Heart right ventricle (tissue), 16 donors: ENCODE measurements at regions of chr17 and their contacts with region 1.

Region 1: DNA sequence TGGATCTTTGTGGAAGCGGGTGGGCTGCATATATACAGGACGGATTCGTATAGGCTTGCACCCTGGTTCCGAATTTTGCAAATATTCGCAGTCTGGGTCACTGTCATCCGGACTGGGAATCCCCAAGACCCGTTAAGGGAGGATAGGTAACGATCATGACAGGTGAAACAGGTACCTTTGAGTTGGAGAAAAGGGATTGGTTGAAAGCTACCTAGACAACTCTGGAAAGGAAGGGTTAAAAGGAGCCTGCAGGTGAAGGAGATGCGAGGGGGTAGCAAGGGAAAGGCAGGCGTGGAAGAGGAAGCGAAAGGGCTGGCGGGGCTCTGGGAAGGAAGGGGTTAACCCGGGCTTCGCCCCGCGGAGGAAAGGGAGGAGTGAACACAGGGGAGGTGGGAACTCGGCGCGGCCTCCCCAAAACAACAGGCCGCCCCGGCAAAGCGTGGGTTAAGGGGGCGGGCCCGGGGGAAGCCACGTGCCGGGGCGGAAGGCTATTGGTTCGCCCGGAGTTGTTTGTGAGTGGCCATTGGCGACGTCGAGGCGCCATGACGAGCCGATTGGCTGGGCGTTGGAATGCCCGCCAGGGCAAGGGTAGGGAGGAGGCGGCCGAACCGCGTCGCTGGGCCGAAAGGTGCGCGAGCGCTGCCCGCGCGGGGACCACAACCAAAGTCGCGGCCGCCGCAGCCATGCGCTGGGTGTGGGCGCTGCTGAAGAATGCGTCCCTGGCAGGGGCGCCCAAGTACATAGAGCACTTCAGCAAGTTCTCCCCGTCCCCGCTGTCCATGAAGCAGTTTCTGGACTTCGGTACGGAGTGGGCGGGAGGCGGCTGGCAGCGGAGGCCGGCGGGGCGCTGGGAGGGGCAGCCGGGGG is at the start of gene PDK2:
- DNase-seq: peak; percentile 96
- ATAC-seq: peak; percentile 92 to 98 (median 96)
- H3K4me3 ChIP-seq: peak within 1 kb of the TSS; percentile 63 to 97 (median 93)
- H3K27ac ChIP-seq: peak within 1 kb of the TSS; percentile 66 to 96 (median 92)
- H3K4me1 ChIP-seq: peaks cover 10 to 53% (median 43%) of the 10 kb centered on the region in 9 donors
- H3K27me3 ChIP-seq: no peaks in the 10 kb centered on the region
- CTCF ChIP-seq: peak in 1 of 9 donors; percentile 9
- total RNA-seq, gene PDK2: 161 to 337 (median 231) TPM

Region 2: GRCh38 chr17:49987681-49988441 is 107.1 kb before region 1 on chr17:
- intact Hi-C with region 1: no loop called
- DNase-seq: no peak
- ATAC-seq: no peak
- H3K4me3 ChIP-seq: no peak overlapping the region
- H3K27ac ChIP-seq: no peak overlapping the region
- H3K4me1 ChIP-seq: peaks cover 0 to 6% (median 0%) of the 10 kb centered on the region in 9 donors
- H3K27me3 ChIP-seq: peaks cover 0 to 97% (median 88%) of the 10 kb centered on the region in 7 donors
- CTCF ChIP-seq: no peak

Region 3: GRCh38 chr17:50043290-50044148 is 51.5 kb before region 1 on chr17:
- intact Hi-C with region 1: no loop called
- DNase-seq: peak in 1 of 2 donors; percentile 54
- ATAC-seq: peak in 7 of 8 donors; percentile 63 to 78 (median 71)
- H3K4me3 ChIP-seq: no peak overlapping the region
- H3K27ac ChIP-seq: peak overlapping the region in 2 of 10 donors; percentile 13 to 29
- H3K4me1 ChIP-seq: peaks cover 7 to 31% (median 16%) of the 10 kb centered on the region in 9 donors
- H3K27me3 ChIP-seq: no peaks in the 10 kb centered on the region
- CTCF ChIP-seq: no peak

Region 4: GRCh38 chr17:50055426-50056230 is 39.4 kb before region 1 on chr17 and contains the start of gene ITGA3:
- intact Hi-C with region 1: loop called in 2 of 10 experiments (anchors 5 kb)
- DNase-seq: peak; percentile 75 to 78
- ATAC-seq: peak; percentile 56 to 77 (median 72)
- H3K4me3 ChIP-seq: peak within 1 kb of the TSS; percentile 61 to 97 (median 80)
- H3K27ac ChIP-seq: peak within 1 kb of the TSS; percentile 57 to 97 (median 90)
- H3K4me1 ChIP-seq: peaks cover 27 to 85% (median 71%) of the 10 kb centered on the region in 9 donors
- H3K27me3 ChIP-seq: peaks cover 0 to 38% (median 0%) of the 10 kb centered on the region in 7 donors
- CTCF ChIP-seq: peak in 1 of 9 donors; percentile 2
- total RNA-seq, gene ITGA3: 12.5 to 44.2 (median 22.5) TPM

Region 5: DNA sequence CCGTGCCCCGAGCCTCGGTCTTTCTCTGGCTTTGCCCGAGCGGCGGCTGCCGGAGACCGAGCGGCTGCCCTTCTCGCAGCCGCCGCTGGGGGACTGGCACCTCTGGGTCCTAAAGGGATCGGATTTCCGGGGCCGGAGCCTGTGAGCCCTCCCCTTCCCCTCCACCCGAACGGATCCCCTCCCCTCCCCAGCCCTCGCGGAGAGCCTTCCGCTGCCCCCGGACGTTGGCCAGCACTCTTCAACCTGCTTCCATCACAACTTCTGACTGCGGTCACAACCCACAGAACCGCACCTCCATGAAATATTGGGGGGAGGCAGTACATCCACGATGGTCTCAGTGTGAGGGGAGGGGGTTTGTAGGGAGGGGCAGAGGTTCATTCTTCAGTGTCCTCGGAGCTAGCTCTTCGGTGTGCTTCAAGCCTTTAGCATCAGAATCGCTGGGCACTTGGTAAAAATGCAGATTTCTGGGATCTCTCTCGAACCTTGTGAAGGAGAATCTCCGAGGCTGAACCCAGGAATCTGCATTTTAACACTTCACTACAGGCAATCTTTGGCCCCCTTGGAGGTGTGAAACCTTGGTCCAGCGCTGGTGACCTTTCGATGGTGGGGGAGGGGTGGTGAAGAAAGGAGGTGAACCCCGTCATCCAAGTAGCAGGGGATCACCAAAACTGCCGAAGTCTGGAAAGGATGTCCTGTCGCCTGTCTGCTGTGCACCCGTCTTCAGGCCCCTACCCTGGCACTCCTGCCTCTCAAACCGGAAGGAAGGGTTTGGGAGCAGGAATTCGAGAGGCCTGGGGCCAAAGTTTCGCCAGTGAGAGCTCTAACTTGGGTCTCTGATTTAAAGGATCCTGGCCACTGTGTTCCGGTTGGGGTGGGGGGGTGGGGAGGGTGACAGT is 56.3 kb after region 1 on chr17:
- intact Hi-C with region 1: loop called in 2 of 10 experiments (anchors 1 to 5 kb)
- DNase-seq: peak; percentile 92 to 93
- ATAC-seq: peak; percentile 73 to 88 (median 80)
- H3K4me3 ChIP-seq: peak overlapping the region; percentile 86 to 99 (median 90)
- H3K27ac ChIP-seq: peak overlapping the region; percentile 93 to 99 (median 98)
- H3K4me1 ChIP-seq: peaks cover 43 to 84% (median 70%) of the 10 kb centered on the region in 9 donors
- H3K27me3 ChIP-seq: no peaks in the 10 kb centered on the region
- CTCF ChIP-seq: peak; percentile 51 to 78 (median 59)

Region 6: DNA sequence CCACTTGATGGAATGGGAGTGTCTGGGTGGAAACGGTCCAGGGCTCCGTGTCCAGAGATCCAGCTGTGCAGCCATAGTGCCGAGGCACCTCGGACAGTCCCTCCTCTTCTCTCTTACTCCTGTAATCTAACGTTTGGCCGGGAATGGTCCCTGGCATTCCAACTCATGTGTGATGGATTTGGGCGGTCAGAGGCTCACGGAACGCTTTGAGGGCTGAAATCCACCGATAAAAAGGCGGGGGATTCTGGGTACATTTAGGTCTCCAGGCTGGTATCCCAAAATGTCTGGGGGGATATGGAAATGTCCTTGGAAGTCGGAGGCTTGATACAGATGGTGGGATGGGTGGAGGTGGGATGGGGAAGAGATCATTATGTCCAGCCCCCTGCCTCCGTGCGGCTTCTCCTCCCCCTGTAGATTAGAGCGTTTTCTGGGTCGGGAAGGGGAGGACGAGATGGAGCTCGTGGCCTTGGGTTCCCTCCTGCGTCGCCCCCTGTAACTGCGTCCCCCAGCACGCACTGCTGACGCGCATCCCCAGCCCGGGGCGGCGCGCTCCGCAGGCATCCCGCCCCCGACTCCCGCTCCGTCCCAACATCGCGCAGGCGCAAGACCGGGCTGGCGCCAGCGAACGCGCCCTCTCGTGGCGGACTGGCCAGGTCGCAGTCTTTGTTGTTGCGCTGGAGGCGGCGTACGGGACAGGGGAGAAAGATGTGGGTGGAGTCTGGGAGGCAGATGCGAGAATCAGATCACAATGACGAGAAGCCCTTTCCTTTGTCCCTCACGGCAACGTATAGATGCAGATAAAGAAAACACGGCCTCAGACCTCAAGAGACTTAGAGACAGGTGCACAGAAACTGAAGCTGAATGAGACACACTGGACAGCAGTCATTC is 66.3 kb after region 1 on chr17:
- intact Hi-C with region 1: loop called in 3 of 10 experiments (anchors 5 kb)
- DNase-seq: peak; percentile 93 to 94
- ATAC-seq: peak; percentile 77 to 93 (median 88)
- H3K4me3 ChIP-seq: peak overlapping the region; percentile 45 to 64 (median 56)
- H3K27ac ChIP-seq: peak overlapping the region in 9 of 10 donors; percentile 40 to 80 (median 73)
- H3K4me1 ChIP-seq: peaks cover 0 to 43% (median 16%) of the 10 kb centered on the region in 9 donors
- H3K27me3 ChIP-seq: no peaks in the 10 kb centered on the region
- CTCF ChIP-seq: peak; percentile 88 to 98 (median 94)

Region 7: DNA sequence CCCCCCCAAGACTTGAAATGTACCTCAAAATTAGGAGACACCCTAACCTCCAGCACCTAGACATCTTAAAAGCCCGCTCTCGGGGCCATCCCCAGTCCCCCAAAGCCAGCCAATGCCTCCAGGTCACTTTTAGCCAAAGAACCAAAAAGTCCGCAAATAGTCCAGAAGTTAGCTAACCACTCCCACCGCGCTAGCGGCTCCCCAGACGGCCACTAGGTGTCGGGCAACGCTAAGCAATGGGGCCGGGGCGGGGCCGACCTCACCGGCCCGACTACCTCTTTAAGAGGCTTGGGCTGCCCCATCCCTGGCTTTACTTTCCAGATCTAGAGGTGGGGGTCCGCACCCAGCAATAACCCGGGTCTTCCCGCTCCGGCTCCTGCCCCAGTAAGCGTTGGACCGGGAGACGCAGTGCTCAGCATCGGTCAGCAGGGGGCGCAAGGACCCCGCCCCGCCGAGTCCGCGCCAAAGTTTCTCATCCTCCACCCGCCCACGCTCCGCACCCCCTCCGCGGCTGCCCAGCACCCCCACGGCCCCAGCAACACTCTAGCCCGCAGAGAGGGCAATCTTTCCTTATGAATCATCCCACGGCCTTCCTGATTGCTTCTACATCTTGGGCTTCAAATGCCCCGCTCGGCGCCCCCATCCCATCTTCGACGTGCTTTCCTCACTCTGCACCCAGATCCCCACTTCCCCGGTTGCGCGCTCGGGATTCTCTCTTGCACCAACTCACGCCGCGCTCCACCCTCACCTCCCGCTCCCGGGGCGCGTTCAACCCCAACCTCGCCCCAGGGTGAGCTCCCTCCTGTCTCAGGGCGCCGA is 105.7 kb after region 1 on chr17:
- intact Hi-C with region 1: loop called in 1 of 10 experiments (anchors 1 kb)
- DNase-seq: peak; percentile 88
- ATAC-seq: peak; percentile 76 to 91 (median 84)
- H3K4me3 ChIP-seq: peak overlapping the region; percentile 13 to 65 (median 60)
- H3K27ac ChIP-seq: peak overlapping the region; percentile 70 to 93 (median 84)
- H3K4me1 ChIP-seq: peaks cover 3 to 59% (median 26%) of the 10 kb centered on the region in 9 donors
- H3K27me3 ChIP-seq: peaks cover 0 to 47% (median 29%) of the 10 kb centered on the region in 7 donors
- CTCF ChIP-seq: peak; percentile 98 to 100 (median 99)

Region 8: GRCh38 chr17:50297407-50297865 is 202.4 kb after region 1 on chr17:
- intact Hi-C with region 1: loop called in 9 of 10 experiments (anchors 2 to 10 kb)
- DNase-seq: peak; percentile 71 to 77
- ATAC-seq: peak; percentile 81 to 96 (median 92)
- H3K4me3 ChIP-seq: no peak overlapping the region
- H3K27ac ChIP-seq: no peak overlapping the region
- H3K4me1 ChIP-seq: peaks cover 0 to 3% (median 0%) of the 10 kb centered on the region in 9 donors
- H3K27me3 ChIP-seq: no peaks in the 10 kb centered on the region
- CTCF ChIP-seq: peak; percentile 83 to 98 (median 95)